A549 (cell line): ENCODE measurements at regions of chr1 and their contacts with region 1.

Region 1: GRCh38 chr1:23216771-23217420 is 406 bp downstream of the HTR1D start:
- DNase-seq: no peak
- ATAC-seq: peak; percentile 77 to 85
- H3K4me3 ChIP-seq: peak overlapping the region; percentile 91
- H3K27ac ChIP-seq: peak overlapping the region; percentile 96 to 97
- H3K4me1 ChIP-seq: peaks cover 36% of the 10 kb centered on the region
- CTCF ChIP-seq: peak; percentile 80
- EP300 ChIP-seq: no peak
- POLR2A ChIP-seq: no peak
- RAD21 ChIP-seq: peak; percentile 57 to 86; a peak in 4 of 5 replicates

Region 2: DNA sequence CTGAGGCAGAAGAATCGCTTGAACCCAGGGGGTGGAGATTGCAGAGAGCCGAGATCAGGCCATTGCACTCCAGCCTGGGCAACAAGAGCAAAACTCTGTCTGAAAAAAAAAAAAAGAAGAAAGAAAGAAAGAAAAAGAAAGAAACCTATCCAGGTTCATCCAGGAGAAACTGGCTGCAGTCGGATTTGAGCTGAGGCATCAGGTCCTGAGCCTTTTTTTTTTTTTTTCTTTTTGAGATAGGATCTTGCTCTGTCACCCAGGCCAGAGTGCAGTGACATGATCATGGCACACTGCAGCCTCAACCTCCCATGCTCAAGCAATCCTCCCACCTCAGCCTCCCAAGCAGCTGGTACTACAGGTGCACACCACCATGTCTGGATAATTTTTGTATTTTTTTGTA is 25.7 kb before region 1 on chr1:
- CTCF ChIA-PET with region 1: interaction called, 17 read pairs
- POLR2A ChIA-PET with region 1: interaction called, 3 read pairs
- DNase-seq: no peak
- ATAC-seq: no peak
- H3K4me3 ChIP-seq: no peak overlapping the region
- H3K27ac ChIP-seq: peak overlapping the region; percentile 97 to 98
- H3K4me1 ChIP-seq: peaks cover 64% of the 10 kb centered on the region
- CTCF ChIP-seq: no peak
- EP300 ChIP-seq: no peak
- POLR2A ChIP-seq: no peak
- RAD21 ChIP-seq: no peak

Region 3: DNA sequence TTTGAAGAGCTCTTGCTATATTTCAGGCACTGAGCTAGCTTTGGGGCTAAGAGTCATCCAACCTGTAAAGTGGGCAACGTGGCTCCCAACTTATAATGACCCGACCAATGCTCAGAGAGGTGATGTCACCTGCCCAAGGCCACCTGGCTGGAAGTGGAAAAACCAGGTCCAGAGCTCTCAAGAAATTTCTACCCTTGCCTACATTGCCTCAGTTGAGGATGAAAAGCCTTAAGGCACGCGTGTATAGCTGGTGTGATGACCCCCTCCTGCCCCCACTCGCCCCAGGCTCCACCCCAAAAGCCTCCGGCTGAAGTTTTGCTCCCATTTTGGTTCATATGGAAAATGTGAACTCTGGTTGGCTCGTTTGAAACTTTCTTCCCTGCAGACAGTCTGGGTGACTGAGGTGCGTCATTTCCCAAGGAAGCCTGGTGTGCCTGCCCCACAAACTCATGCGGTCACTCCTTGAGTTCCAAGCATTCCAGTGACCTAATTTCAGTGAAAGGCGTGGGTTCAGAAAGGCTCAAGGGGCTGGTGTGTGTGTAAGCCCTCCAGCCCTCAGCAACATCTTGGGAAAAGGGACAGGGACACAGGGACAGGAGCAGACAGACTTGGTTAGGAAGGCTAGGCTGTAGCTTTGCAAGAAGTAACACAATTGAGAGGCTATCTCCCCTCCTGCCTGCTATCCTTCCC is 20.1 kb before region 1 on chr1:
- CTCF ChIA-PET with region 1: interaction called, 18 read pairs
- POLR2A ChIA-PET with region 1: interaction called, 3 read pairs
- DNase-seq: peak; percentile 80 to 96
- ATAC-seq: peak; percentile 77 to 84
- H3K4me3 ChIP-seq: no peak overlapping the region
- H3K27ac ChIP-seq: peak overlapping the region; percentile 97 to 98
- H3K4me1 ChIP-seq: peaks cover 65% of the 10 kb centered on the region
- CTCF ChIP-seq: no peak
- EP300 ChIP-seq: peak; percentile 66 to 83; a peak in 3 of 5 replicates
- POLR2A ChIP-seq: no peak
- RAD21 ChIP-seq: 0 out of 5 replicates have a peak, but pooled peaks of 1 of the 2 experiments have one; percentile 10

Region 4: GRCh38 chr1:23273450-23274133 is 56.7 kb after region 1 on chr1:
- CTCF ChIA-PET with region 1: interaction called, 25 read pairs
- POLR2A ChIA-PET with region 1: no interaction called
- DNase-seq: peak; percentile 28 to 88
- ATAC-seq: peak; percentile 82 to 88
- H3K4me3 ChIP-seq: no peak overlapping the region
- H3K27ac ChIP-seq: peak overlapping the region; percentile 74 to 83
- H3K4me1 ChIP-seq: peaks cover 61% of the 10 kb centered on the region
- CTCF ChIP-seq: no peak
- EP300 ChIP-seq: peak; percentile 19 to 30; a peak in 2 of 5 replicates
- POLR2A ChIP-seq: no peak
- RAD21 ChIP-seq: peak; percentile 19 to 27; a peak in 3 of 5 replicates

Region 5: DNA sequence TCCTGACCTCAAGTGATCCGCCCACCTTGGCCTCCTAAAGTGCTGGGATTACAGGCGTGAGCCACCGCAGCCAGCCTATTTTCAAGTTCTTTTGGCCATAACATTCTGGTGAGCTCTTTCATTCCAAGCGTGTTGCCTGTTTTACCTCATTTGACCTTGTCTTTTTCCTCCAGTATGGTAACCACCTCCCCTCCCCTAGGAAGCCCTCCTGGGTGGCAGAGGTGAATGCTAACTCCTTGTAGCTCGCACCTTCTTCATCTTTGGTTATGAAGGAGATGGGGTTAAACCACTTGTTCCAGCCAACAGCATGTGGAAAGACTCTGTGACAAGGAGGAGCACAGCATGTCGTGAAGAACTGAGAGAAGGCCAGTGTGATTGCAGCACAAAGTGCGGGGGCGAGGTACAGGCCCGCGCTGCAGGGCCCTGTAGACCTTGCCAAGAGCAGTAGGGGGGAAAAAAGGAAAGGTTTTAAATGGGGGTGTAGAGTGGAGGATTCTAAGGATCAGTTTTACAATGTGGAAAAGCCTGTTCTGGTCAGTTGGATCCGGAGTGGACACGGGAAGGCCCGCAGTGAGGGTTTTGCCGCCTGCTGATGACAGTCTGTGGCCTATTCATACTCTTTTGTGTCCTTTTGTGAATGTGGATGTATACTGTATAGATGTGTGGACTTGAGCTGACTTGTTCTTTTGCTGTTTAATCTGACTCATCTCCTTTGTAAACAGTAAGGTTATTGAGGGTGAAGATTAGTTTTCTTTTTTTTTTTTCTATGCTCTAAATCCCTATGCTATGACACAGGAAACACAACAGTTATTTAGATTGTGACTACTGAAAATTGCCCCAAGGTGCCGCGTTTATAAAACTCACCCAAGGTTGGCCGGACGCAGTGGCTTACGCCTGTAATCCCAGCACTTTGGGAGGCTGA is 160.3 kb after region 1 on chr1:
- CTCF ChIA-PET with region 1: no interaction called
- POLR2A ChIA-PET with region 1: no interaction called
- DNase-seq: peak; percentile 77 to 91
- ATAC-seq: peak; percentile 97 to 98
- H3K4me3 ChIP-seq: no peak overlapping the region
- H3K27ac ChIP-seq: peak overlapping the region; percentile 86 to 90
- H3K4me1 ChIP-seq: peaks cover 23% of the 10 kb centered on the region
- CTCF ChIP-seq: no peak
- EP300 ChIP-seq: no peak; a peak in 1 of 5 replicates
- POLR2A ChIP-seq: no peak
- RAD21 ChIP-seq: no peak; a peak in 1 of 5 replicates